Posterior vena cava (tissue), 2 donors: ENCODE measurements at regions of chr17 and their contacts with region 1.

Region 1: DNA sequence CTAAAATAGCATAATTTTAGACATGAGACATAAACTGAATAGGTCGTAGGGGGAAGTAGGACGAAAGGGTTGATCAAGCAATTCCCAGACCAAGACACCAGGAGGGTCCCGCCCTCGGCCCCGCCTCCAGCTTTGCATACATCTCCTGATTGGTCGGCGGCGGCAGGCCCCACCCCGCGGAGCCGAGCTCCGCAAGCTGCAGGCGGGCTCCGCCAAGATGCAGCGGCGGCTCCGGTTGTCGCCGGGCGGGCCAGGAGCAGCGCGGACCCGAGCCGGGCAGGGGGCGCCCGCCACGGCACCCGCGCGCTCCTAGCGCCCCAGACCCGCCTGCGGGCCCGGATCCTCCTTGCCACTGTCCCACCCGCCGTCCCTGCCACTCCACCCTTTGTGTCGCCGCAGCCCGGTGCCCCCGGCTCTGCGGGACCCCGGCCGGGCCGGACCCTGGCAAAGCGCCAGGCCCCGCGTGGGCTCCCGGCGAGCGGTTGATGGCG is at the start of gene CDR2L:
- DNase-seq: peak; percentile 99
- total RNA-seq, gene CDR2L: 17.4 to 26.0 TPM

Region 2: DNA sequence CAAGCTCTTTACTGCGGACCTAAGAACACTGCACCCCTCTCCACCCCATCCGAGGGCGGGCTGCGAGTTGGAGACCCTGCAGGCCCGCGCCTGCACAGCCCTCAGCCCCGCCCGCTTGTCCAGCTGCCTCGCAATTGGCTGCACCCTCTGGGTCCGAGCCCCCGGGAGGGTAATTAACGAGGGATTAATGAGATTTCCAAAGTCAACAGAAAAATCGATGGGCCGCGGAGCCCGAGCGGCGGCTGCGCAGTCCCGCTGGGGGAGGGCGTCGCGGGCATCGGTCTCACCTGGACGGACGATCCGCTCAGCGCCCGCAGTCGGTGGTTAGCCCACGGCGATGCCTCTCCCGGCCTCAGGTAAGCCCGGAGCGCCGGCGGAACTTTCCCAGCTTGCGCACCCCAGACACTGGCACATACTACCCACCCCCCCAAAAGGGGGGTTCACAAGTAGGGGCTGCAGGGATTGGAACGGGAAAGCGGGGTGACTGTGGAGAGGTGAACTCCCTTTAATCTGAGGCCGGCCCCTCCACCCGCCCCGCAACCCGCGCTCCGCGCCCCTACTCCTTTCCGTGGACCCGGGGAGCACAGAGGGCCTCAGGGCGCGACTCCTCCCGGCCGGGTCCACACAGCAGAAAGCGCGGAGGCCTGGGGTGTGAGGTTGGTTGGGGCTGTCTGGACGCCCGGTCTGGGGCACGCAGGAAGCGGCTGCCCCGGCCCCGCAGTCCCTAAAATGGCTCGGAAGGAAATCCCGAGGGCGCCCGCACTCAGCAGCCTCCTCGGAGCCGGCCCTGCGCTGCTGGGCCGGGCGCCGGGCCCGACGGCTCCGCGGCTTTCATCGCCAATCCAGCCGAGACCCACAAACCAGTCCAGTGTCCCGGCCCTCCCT is 51.6 kb before region 1 on chr17 and contains the start of gene OTOP3:
- intact Hi-C with region 1: no loop called
- DNase-seq: no peak
- total RNA-seq, gene OTOP3: not detected

Region 3: DNA sequence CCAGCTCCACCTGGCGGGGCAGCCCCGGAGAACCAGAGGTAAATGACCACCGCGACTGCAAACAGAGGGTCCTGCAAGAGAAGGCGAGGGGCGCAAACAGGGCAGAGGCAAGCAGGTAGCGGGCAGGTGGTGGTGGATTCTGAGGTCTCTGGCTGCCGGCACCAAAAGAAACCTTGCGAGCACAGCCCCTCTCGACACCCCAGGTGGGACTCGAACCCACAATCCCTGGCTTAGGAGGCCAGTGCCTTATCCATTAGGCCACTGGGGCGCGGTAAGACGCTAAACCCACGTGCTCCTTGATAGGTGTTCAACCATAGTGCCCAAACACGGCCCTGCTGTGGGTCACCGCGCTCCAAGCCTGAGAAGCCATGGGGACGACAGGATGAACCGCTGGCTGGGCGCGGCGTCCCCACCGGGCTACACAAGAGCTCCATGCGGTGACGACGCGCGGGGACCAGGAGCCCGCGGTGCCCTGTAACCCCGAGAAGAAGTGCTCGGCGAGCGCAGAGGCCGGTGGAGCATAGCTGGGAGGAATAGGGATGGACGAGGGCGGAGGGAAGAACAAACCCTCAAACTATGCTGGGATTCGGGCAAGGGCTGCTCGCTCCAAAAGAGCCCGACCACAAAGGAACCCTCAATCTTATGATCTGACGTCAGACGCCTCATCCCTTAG is 46.9 kb after region 1 on chr17:
- intact Hi-C with region 1: loop called in 1 of 2 experiments (anchors 5 kb)
- DNase-seq: peak; percentile 95

Region 4: DNA sequence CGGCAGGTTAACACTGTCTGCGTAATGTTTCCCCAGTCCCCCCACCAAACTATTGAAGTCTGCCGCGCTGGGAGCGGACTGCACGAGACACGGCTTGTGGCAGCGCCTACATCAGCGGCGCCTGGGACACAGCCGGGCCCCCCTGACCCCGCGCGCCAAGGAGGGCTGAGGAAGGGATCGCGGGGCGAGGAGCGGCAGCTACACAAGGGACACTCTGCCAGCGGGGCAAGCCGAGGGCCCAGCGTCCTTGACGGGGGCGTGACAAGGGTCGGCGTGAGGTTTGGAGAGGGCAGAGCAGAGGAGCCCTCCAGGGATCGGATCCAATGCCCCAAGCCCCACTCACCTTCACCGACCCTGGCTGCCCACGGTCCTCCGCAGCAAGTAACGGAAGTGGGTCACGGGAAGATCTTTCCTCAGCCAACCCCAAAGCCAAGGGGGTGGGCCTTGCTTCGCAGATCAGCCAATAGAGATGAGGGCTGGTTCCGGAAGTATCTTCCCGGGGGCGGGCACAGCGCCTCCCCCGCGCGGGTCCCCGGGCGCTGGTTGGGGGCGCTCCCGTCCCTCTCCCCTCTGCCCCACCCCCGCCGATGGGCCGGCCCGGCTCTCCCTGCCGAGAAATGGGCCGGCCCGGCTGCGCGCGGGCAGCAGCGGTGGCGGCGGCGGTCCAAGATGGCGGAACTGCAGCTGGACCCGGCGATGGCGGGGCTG is 59.3 kb after region 1 on chr17 and contains the starts of genes ATP5PD and KCTD2:
- intact Hi-C with region 1: loop called in 1 of 2 experiments (anchors 2 kb)
- DNase-seq: peak; percentile 98
- total RNA-seq, gene ATP5PD: 205 to 235 TPM
- total RNA-seq, gene KCTD2: 23.0 to 25.0 TPM

Region 5: GRCh38 chr17:75051941-75052340 is 64.5 kb after region 1 on chr17:
- intact Hi-C with region 1: loop called in 1 of 2 experiments (anchors 2 kb)
- DNase-seq: no peak

Region 6: DNA sequence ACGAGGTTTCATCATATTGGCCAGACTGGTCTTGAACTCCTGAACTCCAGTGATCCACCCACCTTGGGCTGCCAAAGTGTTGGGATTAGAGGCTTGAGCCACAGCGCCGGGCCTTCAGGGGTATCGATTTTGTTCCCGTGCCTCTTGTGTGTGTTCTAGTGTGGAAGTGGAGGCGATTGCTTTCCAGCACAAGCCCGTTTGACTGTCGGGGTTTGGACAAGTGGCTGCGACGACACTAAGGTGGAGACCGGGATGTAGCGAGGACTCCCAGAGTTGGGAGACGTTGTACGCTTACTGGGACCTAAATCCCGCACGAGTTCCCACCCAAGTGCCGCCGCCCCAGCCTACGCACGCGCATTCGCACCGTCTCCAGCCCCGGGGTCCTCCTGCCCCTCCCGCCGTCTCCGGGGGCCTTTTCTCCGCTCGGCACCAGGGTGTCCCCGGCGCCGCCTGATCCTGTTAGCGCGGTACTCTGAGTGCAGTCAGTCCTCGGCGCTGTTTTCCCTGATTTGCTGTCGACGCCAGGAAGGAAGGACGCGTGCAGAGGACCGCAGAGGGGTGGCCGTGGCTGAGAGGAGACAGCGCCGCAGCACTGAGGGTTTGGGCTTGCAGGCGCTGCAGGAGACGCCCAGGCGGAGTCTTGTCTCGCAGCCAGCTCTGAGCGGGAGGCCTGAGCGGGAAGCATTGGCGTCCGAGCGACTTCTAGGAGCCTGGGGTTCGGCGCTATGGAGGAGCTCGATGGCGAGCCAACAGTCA is 217.8 kb after region 1 on chr17 and contains the start of gene NUP85:
- intact Hi-C with region 1: loop called in 1 of 2 experiments (anchors 10 kb)
- DNase-seq: peak; percentile 98
- total RNA-seq, gene NUP85: 49.6 to 50.9 TPM